Activated CD4-positive, alpha-beta T cell treated with anti-CD3 and anti-CD28 coated beads for 36 hours (primary cell): ENCODE measurements at regions of chr4 and their contacts with region 1.

Region 1: DNA sequence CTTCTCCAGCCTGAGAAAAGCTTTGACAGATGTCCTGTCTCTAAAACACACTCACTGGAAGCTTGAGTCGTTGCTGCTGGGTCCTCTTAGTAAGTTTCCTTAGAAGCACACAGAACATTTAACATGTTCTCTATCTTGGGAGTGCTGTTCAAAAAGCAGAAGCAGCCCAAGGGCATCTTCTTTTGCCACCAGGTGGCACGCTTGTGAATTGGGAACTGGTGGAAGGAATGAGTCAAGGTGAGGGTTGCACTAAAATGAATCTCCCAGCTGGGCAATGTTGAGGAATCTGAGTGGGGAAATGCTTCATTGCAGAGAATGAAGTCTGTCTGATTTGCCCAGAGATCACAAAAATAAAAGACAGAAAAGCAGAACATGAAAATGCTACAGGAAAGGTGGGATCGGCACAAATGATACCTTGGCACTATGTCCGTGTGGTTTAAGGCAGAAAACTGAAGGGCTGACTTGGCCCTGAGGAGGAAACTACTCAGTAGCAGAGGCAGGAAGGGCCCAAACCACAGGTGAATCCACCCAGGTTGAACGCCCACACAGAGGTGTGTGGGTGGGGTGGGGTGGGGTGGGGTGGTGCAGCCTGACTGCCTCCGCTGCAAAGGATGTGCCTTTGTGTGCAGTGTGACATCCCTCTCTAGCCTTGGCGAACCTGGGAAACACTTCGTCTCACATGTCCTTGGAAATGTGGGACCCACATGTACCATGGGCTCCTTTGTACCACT is 26.0 kb downstream of the KIT start:
- DNase-seq: peak; percentile 73
- ATAC-seq: peak; percentile 75
- H3K4me3 Mint-ChIP-seq: no peak overlapping the region
- H3K27ac Mint-ChIP-seq: no peak overlapping the region
- H3K4me1 Mint-ChIP-seq: peaks cover 15% of the 10 kb centered on the region
- H3K27me3 Mint-ChIP-seq: no peaks in the 10 kb centered on the region

Region 2: DNA sequence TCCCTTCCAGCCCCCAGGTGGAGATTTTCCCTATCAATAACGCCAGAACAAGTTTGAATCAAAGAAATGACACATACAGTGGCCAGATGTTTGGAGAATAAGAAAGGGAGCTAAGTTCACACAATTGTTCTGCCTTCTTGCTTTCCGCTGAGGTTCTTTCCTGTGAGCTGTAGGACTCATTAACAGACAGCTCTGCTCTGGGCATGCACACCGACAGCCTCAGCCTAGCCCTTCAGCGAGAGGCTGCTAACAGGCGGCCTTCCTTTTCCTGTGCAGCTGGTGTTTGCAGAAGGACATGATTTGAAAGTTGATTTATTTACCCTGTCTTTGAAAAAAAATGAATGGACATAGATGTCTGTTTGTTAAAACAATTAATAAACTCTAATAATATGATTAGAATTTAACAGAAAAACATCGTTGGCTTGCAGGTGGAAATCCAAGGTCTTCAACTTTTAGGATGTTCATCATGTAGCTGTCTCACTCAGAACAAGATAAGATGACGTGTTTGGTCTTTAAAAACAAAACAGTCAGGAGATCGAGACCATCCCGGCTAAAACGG is 258.3 kb after region 1 on chr4:
- CTCF ChIA-PET with region 1: interaction called, 3 read pairs
- POLR2A ChIA-PET with region 1: no interaction called
- intact Hi-C with region 1: loop called in 1 of 2 experiments (anchors 1 kb)
- DNase-seq: peak; percentile 58
- ATAC-seq: peak; percentile 77
- H3K4me3 Mint-ChIP-seq: peak overlapping the region; percentile 31
- H3K27ac Mint-ChIP-seq: peak overlapping the region; percentile 59
- H3K4me1 Mint-ChIP-seq: peaks cover 44% of the 10 kb centered on the region
- H3K27me3 Mint-ChIP-seq: no peaks in the 10 kb centered on the region

Region 3: DNA sequence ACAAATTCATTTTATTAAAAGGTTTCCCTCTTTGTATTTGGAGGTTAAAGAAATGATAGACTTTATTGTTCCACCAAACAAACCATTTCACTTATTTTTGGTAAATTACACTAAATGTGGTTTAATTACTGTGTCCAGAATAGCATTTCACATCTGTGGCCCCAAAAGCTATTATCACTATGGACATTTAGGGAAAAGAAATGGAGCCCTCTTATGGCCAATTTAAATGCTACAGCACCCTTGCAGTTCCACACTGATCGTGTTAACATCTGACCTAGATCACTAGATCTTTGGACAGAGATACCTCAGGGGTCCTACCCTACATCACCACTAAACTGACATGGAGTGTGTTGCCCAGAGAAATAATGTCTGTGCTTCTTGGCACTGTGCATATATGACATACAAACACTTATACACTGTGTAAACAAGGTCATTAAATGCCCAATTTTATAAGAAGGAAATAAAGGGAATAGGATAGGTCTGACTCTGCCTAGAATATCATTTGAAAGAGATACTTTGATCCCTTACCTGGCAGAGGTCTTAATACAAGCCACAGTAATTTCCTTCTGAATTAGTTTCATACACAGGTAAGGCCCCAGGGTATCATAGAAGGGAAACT is 277.7 kb after region 1 on chr4:
- CTCF ChIA-PET with region 1: interaction called, 7 read pairs
- POLR2A ChIA-PET with region 1: no interaction called
- intact Hi-C with region 1: loop called (anchors 1 kb)
- DNase-seq: no peak
- ATAC-seq: peak; percentile 44
- H3K4me3 Mint-ChIP-seq: no peak overlapping the region
- H3K27ac Mint-ChIP-seq: no peak overlapping the region
- H3K4me1 Mint-ChIP-seq: peaks cover 14% of the 10 kb centered on the region
- H3K27me3 Mint-ChIP-seq: no peaks in the 10 kb centered on the region

Region 4: DNA sequence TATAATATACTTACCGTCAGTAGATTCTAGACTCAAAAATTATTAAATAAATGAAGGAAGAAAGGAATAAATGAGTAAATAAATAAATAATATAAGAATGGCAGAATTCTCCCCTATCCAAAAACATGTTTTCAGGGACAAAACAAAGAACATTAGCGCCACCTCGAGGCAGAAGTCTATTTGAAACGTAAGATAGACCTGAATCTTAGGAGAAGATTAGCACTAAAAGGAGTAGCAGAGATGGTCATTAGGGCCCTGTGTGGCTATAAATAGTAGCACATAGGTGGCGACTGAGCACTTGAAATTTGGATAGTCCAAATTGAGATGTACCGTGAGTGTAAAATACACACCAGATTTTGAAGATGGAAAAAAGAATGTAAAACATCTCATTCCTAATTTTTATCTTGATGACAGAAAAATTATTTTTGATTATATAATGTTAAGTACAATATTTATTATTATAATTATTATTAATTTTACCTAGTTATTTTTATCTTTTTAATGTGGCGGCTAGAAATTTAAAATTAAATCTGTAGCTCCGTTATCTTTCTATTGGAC is 638.0 kb after region 1 on chr4:
- CTCF ChIA-PET with region 1: no interaction called
- POLR2A ChIA-PET with region 1: no interaction called
- intact Hi-C with region 1: loop called (anchors 2 to 5 kb)
- DNase-seq: peak; percentile 85
- ATAC-seq: no peak
- H3K4me3 Mint-ChIP-seq: no peak overlapping the region
- H3K27ac Mint-ChIP-seq: no peak overlapping the region
- H3K4me1 Mint-ChIP-seq: peaks cover 35% of the 10 kb centered on the region
- H3K27me3 Mint-ChIP-seq: peaks cover 2% of the 10 kb centered on the region